ENCODE measurements at regions of chr7 and their contacts with region 1.

Region 1: GRCh38 chr7:50679218-50680007 is 103.3 kb downstream of the GRB10 start:
- DNase-seq: no peak
- ATAC-seq: peak; percentile 83
- H3K4me3 Mint-ChIP-seq: no peak overlapping the region
- H3K27ac Mint-ChIP-seq: no peak overlapping the region
- H3K4me1 Mint-ChIP-seq: peaks cover 2% of the 10 kb centered on the region
- H3K27me3 Mint-ChIP-seq: peaks cover 6% of the 10 kb centered on the region

Region 2: DNA sequence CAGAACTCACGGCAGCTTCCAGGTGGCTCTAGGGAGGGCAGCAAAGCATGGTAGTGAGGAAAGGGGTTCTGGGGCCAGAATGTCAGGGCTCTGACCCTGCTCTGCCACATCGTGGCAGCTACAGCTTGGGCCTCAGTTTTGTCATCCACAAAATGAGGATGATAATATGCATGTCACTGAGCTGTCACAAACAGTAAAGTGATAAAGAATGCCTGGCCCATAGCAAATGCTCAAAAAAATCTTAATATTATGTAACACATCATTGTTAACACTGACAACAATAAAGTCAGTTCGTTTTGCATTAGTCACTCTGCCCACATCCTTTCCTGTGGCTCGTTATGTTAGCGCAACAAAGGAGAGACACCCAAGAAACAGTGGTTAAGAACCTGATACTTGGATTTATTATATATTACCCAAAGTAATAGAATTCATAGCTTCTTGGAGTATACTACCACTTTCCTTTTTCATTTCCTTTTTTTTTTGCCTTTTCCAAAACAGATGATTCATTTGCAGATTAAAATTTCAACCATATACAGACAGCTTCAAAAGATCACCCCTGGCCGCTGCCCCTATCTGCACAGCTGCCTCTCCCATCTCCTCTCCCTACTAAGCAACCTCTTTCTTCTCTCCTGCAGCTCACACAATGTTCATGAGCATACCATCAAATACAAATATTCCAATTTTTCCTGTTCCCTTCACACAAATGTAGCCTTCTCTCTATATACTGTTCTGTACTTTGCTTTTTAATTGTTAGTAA is 68.7 kb before region 1 on chr7:
- CTCF ChIA-PET with region 1: interaction called, 18 read pairs
- POLR2A ChIA-PET with region 1: no interaction called
- DNase-seq: peak; percentile 82
- ATAC-seq: peak; percentile 82
- H3K4me3 Mint-ChIP-seq: peak overlapping the region; percentile 12
- H3K27ac Mint-ChIP-seq: peak overlapping the region; percentile 62
- H3K4me1 Mint-ChIP-seq: peaks cover 52% of the 10 kb centered on the region
- H3K27me3 Mint-ChIP-seq: peaks cover 10% of the 10 kb centered on the region

Region 3: GRCh38 chr7:50664461-50664922 is 14.9 kb before region 1 on chr7:
- CTCF ChIA-PET with region 1: interaction called, 23 read pairs
- POLR2A ChIA-PET with region 1: no interaction called
- DNase-seq: peak; percentile 32
- ATAC-seq: peak; percentile 25
- H3K4me3 Mint-ChIP-seq: peak overlapping the region; percentile 43
- H3K27ac Mint-ChIP-seq: peak overlapping the region; percentile 86
- H3K4me1 Mint-ChIP-seq: peaks cover 69% of the 10 kb centered on the region
- H3K27me3 Mint-ChIP-seq: no peaks in the 10 kb centered on the region

Region 4: GRCh38 chr7:50706451-50706937 is 27.1 kb after region 1 on chr7:
- CTCF ChIA-PET with region 1: no interaction called
- POLR2A ChIA-PET with region 1: no interaction called
- DNase-seq: no peak
- ATAC-seq: no peak
- H3K4me3 Mint-ChIP-seq: no peak overlapping the region
- H3K27ac Mint-ChIP-seq: no peak overlapping the region
- H3K4me1 Mint-ChIP-seq: no peaks in the 10 kb centered on the region
- H3K27me3 Mint-ChIP-seq: peaks cover 7% of the 10 kb centered on the region